GM18951 (cell line): ENCODE measurements at regions of chr20 and their contacts with region 1.

Region 1: GRCh38 chr20:36135159-36135558 is 19.4 kb upstream of the EPB41L1 start:
- POLR2A ChIP-seq: no peak

Region 2: GRCh38 chr20:35232575-35232974 is 902.6 kb before region 1 on chr20:
- in situ Hi-C with region 1: no loop called
- POLR2A ChIP-seq: no peak

Region 3: DNA sequence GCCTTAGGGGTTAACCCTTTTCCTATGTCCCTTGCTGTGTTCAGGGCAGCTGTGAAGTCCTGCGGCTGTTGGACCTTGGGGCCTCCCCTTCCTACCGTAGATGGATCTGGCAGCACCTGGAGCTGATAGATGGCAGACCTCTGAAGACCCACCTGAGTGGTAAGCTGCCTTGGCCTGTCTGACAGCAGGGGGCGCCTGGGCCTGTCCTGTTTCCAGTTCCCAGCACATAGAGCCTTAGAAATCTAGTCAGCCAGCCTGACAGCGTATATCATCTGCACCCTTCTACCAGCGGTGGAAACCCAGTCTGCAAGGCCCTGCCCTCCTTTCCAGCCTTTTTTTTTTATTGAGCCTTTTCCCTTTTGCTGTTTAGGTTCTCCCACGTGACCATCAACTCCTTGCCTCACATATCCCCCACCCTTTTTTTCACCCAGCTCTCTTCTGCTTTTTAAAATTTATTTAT is 140.1 kb before region 1 on chr20:
- in situ Hi-C with region 1: loop called (anchors 5 kb)
- POLR2A ChIP-seq: no peak

Region 4: DNA sequence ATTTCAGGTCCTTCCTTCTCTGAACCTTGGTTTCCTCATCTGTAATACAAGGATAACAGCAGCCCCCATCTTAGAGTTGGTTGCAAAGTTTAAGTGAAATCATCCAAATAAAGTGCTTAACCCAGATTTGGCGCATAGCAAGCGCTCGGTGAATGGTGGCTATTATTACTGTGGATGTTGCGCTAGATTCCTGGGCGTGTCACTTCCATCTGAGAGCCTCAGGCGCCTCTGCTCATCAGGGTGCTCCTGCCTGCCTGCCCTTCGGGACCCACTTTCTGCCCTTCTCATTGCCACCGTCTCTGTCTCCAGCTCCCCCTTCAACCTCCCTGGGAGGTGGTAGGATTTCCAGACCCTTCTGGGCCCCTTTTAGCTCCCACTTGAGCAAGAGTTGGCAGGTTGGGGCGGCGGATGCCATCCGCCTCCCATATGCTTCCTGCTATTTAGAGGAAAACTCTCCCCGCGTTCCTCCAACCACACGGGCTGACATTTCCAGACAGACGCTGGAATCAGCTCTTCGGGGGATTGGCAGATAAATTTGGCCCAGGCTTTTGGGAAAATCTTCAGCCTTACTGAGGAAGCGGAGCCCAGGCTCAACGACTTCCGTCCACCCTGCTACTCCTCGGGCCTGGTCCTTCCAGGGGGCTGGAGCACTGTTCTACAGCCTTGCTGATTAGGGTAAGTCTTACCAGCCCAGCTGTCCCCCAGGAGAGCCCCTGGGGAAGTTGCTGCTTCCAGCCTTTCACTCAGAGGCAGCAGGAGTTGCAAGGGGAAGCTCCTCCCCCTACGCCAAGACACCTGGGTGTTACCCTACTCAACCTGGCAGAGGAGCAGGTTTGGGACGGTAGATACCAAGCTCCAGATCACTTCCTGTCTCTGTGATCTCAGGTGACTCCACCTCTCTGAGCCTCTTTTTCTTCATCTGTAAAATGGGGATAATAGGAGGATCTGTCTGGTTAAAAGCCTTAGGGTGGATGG is 242.5 kb after region 1 on chr20:
- in situ Hi-C with region 1: no loop called
- POLR2A ChIP-seq: no peak